ENCODE measurements at regions of chr17 and their contacts with region 1.

Region 1: DNA sequence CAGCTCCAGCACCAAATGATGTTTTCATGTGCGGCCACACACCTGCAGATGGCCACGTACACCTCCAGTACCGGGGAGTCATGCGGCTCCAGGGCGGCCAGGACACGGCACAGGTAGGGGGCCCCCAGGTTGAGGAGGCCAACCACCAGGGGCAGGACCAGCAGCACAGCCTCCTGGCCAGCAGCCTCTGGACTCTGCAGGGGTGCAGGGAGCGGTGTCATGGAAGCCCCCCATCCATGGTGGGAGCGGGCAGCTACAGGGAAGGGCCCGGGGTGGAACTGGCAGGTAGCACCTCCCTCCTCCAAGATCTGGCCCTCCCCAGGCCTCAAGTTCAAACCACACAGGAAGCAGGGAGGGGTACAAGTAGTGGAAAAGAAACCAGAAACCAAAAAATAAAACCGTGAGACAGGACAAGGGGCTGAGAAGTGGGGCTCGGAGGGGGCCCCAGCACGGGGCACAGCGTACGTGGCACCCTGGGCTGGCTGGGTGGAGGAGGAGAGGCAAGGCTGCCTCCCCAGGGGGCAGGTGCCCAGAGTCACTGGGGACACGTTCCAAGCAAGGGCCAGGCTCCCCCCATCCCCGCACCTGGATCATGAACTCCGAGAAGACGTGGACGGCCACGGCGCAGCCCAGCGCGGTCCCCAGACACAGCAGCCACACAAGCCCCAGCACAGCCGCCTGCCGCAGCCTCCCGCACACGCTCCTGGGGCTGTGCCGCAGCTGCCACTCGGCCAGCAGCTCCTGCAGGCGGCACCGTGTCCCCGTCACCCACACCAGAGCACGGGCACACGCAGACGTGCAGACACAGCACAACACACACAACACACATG is 7.4 kb downstream of the TMC6 start:
- DNase-seq: peak; percentile 74
- ATAC-seq: peak; percentile 56
- H3K4me3 Mint-ChIP-seq: peak overlapping the region; percentile 66
- H3K27ac Mint-ChIP-seq: peak overlapping the region; percentile 93
- H3K4me1 Mint-ChIP-seq: peaks cover 59% of the 10 kb centered on the region
- H3K27me3 Mint-ChIP-seq: no peaks in the 10 kb centered on the region

Region 2: DNA sequence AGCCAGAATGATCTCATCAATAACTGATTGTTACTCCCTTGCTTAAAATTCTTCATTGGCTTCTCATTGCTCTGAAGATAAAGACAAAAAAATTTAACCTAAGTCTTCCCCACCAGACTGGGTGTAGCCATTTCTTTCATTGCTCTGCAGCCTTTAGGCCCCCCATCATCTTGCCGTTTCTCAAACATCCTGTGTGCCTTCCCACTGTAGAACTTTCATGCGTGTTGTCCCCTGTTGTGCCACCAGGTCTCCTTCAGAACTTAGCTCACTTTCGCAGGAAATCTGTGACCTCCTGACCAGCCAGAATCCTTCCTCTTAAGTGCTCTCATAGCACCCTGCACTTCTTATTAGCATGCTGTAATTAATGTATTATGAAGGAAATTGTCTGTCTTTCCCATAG is 130.9 kb before region 1 on chr17:
- CTCF ChIA-PET with region 1: no interaction called
- POLR2A ChIA-PET with region 1: no interaction called
- intact Hi-C with region 1: no loop called
- DNase-seq: no peak
- ATAC-seq: no peak
- H3K4me3 Mint-ChIP-seq: no peak overlapping the region
- H3K27ac Mint-ChIP-seq: no peak overlapping the region
- H3K4me1 Mint-ChIP-seq: peaks cover 46% of the 10 kb centered on the region
- H3K27me3 Mint-ChIP-seq: no peaks in the 10 kb centered on the region

Region 3: DNA sequence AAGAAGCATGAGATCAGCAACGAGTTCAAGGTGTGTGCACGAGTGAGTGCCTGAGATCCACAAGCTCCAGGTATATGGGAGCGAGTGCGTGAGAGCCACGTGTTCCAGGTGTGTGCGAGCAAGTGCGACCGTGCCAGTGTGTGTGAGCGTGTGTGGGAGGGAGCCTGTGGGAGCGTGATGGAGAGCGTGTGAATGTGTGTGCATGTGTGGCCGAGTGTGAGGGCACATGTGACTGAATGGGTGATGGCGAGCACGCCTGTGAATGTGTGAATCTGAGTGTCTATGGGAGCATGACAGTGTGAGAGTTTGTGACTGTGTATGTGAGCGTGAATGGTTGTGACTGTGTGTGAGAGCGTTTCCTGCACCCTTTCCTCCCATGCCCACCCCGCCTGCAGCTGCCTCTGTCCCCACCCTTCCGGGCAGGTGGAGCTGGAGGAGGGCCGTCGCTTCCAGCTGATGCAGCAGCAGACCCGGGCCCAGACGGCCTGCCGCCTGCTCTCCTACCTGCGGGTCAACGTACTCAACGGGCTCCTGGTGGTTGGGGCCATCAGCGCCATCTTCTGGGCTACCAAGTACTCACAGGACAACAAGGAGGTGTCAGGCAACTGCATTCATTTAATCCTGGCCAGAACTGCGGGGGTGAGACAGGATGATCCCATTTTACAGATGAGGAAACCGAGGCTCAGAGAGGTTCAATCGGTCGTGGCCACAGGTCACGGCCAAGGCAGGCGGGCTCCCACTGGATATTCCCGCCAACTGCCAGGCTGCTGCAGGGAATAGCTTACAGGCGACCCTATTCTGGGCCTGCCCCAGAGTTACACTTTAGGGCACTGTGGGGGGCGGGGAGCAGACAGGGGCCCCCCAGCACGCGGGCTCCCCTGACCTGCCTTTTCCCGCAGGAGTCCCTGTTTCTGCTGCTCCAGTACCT is 13.0 kb after region 1 on chr17:
- CTCF ChIA-PET with region 1: interaction called, 20 read pairs
- POLR2A ChIA-PET with region 1: interaction called, 5 read pairs
- intact Hi-C with region 1: loop called (anchors 1 kb)
- DNase-seq: peak; percentile 88
- ATAC-seq: peak; percentile 21
- H3K4me3 Mint-ChIP-seq: peak overlapping the region; percentile 94
- H3K27ac Mint-ChIP-seq: peak overlapping the region; percentile 73
- H3K4me1 Mint-ChIP-seq: peaks cover 72% of the 10 kb centered on the region
- H3K27me3 Mint-ChIP-seq: no peaks in the 10 kb centered on the region

Region 4: GRCh38 chr17:78168242-78168902 is 47.2 kb after region 1 on chr17 and contains the start of gene SYNGR2:
- CTCF ChIA-PET with region 1: no interaction called
- POLR2A ChIA-PET with region 1: no interaction called
- intact Hi-C with region 1: no loop called
- DNase-seq: peak; percentile 93
- ATAC-seq: peak; percentile 79
- H3K4me3 Mint-ChIP-seq: peak within 1 kb of the TSS; percentile 71
- H3K27ac Mint-ChIP-seq: peak within 1 kb of the TSS; percentile 69
- H3K4me1 Mint-ChIP-seq: peaks cover 35% of the 10 kb centered on the region
- H3K27me3 Mint-ChIP-seq: no peaks in the 10 kb centered on the region
- total RNA-seq, gene SYNGR2: 79.1 to 89.2 TPM